ENCODE measurements at regions of chr3 and their contacts with region 1.

Region 1: DNA sequence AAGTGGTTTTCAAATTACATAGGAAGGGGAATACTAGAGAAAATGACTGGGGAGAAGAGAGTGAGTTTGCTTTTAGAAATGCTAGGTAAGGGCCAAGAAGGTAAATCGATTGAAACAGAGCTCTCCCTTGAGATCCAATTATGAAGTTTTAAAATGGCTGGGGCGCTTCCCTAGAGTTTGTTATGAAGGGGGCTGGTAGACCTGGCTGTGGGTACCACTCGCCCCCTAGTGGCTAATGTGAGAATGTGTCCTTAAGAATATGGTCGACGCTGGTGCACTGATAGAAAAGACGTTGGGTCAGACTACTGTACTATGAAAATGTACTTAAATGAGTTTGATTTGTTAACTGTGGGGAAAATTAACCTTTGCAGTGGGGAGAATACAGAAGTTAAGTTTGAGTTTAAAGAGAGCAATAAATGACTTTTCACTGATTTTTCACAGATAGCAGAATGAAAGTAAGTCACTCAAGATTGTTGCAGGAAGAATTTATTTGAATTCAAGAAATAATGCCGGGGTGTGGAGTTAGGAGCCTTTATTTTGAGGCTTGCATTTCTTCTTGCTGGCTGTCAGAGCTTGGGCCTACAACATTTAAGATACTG is 9.2 kb downstream of the TMPRSS7 start:
- DNase-seq: peak; percentile 57
- CTCF ChIP-seq: peak; percentile 80

Region 2: DNA sequence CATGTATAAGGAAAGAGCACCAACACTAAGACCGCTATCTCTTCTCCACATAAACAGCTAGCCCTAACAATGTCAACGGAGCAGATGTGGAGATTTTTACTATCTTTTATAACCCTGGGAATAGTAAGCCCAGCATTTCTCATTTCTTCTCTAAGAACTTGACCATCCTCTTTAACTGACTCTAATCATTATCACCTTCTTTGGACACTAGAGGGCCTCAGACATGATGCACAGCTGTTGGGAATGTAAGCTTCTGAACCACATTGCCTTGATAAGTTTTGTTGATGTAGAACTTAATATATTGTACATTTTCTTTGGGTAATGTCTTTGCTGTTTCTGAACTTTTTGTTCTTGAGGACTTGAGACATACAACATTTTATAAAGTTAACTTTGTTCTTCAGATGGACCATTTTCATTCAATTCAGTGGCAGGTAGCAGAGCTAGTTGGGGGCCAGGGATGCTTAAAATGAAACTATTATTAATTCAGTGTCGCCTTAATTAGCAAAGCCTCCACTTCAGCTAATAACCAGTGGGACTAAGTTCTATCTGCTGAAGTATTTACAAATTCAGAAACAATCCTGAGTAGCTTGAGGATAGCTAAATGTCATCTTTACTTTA is 54.5 kb before region 1 on chr3:
- CTCF ChIA-PET with region 1: interaction called, 19 read pairs
- POLR2A ChIA-PET with region 1: no interaction called
- DNase-seq: peak; percentile 41
- CTCF ChIP-seq: peak; percentile 85

Region 3: DNA sequence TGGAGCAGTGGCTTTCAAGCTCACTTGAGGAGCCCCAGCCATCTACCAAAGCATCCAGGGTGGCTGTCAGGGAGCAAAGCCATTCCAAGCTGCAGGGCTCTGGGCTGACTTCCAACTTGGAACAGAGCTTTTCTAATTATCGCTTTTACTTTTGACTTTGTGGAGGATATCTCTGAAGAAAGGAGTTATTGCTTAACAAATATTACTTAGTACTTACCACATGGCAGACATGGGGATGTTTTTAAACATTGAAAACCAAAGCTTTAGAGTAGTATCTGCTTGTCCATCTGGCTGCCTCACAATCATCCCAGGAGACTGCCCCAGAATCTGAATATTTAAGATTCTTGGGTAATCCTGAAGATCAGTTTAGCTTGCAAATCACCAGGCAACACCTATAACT is 36.1 kb before region 1 on chr3:
- CTCF ChIA-PET with region 1: interaction called, 18 read pairs
- POLR2A ChIA-PET with region 1: no interaction called
- DNase-seq: no peak
- CTCF ChIP-seq: no peak

Region 4: DNA sequence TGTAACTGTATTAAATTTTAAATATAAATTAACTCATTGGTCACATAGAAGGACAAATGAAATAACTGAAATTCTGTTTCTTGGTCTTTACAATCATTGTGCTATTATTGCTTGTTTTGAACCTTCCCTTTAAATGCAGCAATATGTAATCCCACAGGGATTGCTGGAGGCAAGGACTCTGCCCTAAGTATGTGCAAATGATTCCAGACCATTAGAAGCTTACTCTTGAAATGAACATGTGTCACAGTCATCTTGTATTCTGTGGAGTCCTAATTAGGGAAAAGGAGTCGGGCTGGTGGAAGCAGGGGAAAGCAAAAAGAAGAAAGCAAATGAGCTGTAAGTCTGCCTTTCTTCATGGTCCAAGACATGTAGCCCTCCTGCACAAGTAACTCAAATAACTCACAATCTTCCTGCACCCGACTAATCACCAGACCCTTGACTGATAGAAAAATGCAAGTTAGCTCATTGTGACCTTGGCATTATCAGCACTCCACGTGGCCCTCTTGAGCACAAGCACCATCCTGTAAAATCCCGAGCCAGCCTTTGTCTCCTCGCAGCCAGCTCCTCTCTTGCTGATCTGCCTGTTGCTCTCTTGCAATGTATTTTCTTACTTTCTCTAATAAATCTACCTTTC is 11.5 kb before region 1 on chr3:
- CTCF ChIA-PET with region 1: interaction called, 16 read pairs
- POLR2A ChIA-PET with region 1: no interaction called
- DNase-seq: no peak
- CTCF ChIP-seq: no peak

Region 5: DNA sequence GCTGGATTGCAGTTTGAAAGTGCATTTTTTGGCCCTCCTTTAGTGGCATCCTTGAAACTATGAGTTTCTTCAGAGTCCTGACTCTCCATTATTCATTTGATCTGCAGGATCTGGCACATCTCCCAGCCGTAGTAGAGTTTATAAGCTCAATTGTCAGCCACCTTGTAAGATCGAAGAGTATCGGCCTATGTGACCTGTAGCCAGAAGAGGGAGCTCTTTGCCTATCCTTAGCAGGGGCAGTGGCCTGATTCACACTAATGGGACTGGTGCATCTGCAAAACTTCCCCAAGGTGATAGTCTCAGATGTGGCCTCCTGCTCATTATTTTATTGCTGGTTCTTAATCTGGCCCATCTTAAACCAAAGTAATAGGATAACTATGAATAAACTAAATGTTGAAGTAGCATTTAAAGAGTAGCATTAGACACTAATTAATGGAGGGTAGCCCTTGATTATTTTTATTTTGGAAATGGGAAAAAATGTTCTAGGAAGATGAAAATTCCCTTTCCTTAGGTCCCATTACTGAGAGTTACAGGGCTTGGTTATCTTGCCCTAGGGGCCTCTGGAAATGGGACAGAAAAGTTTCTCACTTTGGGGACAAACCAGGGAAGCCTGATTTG is 68.2 kb after region 1 on chr3:
- CTCF ChIA-PET with region 1: no interaction called
- POLR2A ChIA-PET with region 1: no interaction called
- DNase-seq: peak; percentile 78
- CTCF ChIP-seq: peak; percentile 71

Measured in GM10248 (cell line).